SK-N-SH (cell line): ENCODE measurements at regions of chr2 and their contacts with region 1.

Region 1: GRCh38 chr2:47002480-47003381 is 87.1 kb upstream of the MCFD2 start:
- DNase-seq: peak; percentile 90
- H3K4me3 ChIP-seq: no peak overlapping the region
- H3K27ac ChIP-seq: peak overlapping the region; percentile 37 to 99; a peak in 3 of 4 replicates
- H3K4me1 ChIP-seq: peaks cover 9 to 87% of the 10 kb centered on the region in 2 experiments
- H3K27me3 ChIP-seq: no peaks in the 10 kb centered on the region
- CTCF ChIP-seq: no peak
- EP300 ChIP-seq: peak in 1 of 2 experiments; percentile 27; a peak in 1 of 4 replicates
- RAD21 ChIP-seq: no peak

Region 2: GRCh38 chr2:46806526-46806925 is 196.2 kb before region 1 on chr2:
- CTCF ChIA-PET with region 1: no interaction called
- POLR2A ChIA-PET with region 1: no interaction called
- DNase-seq: peak; percentile 3
- H3K4me3 ChIP-seq: no peak overlapping the region
- H3K27ac ChIP-seq: peak overlapping the region in 1 of 2 experiments; percentile 100; a peak in 2 of 4 replicates
- H3K4me1 ChIP-seq: peaks cover 24 to 58% of the 10 kb centered on the region in 2 experiments; a peak in 3 of 4 replicates
- H3K27me3 ChIP-seq: no peaks in the 10 kb centered on the region
- CTCF ChIP-seq: no peak
- EP300 ChIP-seq: peak in 1 of 2 experiments; percentile 93; a peak in 2 of 4 replicates
- RAD21 ChIP-seq: no peak

Region 3: DNA sequence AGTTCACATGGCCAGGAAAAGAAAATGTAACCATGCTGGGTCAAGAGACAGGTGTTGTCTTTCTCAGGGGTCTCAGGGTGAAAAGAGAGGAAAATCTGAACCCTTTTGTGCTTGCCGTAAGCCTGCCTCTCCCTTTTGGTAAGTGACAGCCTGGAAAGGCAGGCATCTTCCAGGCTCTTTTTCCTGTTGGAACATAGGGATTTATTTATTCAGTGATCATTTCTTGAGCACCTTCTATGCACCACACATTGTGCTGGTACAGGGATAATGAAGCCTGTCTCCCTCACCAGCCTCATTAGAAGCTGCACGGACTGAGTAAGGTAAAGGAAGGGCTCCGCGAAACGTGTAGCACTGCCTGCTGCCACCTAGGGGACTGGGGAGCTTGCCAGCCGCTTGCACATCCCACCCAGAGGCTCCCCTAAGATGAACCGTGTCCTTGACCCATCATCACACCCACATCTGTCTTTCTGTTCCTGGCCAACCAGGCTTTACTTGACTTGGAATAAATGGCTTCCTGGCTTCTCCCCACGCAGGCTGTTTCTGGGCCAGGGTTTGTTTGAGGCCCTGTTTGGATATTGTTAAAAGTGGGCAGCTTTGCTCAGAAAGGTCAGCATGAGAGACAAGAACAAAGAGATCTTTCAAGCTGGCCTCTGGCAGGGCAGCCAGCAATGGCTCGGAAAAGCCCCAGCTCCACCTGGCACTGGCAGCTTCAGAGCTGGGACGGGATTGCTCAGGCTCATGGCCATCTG is 13.8 kb before region 1 on chr2:
- CTCF ChIA-PET with region 1: interaction called, 3 read pairs
- POLR2A ChIA-PET with region 1: interaction called, 12 read pairs
- DNase-seq: peak; percentile 74
- H3K4me3 ChIP-seq: no peak overlapping the region
- H3K27ac ChIP-seq: peak overlapping the region in 1 of 2 experiments; percentile 93; a peak in 2 of 4 replicates
- H3K4me1 ChIP-seq: peaks cover 34 to 71% of the 10 kb centered on the region in 2 experiments
- H3K27me3 ChIP-seq: no peaks in the 10 kb centered on the region
- CTCF ChIP-seq: peak; percentile 26
- EP300 ChIP-seq: no peak
- RAD21 ChIP-seq: peak; percentile 39

Region 4: GRCh38 chr2:47016172-47016913 is 13.6 kb after region 1 on chr2:
- CTCF ChIA-PET with region 1: interaction called, 23 read pairs
- POLR2A ChIA-PET with region 1: interaction called, 3 read pairs
- DNase-seq: no peak
- H3K4me3 ChIP-seq: no peak overlapping the region
- H3K27ac ChIP-seq: peak overlapping the region; percentile 84 to 86
- H3K4me1 ChIP-seq: peaks cover 21 to 56% of the 10 kb centered on the region in 2 experiments
- H3K27me3 ChIP-seq: no peaks in the 10 kb centered on the region
- CTCF ChIP-seq: peak; percentile 50
- EP300 ChIP-seq: peak in 1 of 2 experiments; percentile 85; a peak in 2 of 4 replicates
- RAD21 ChIP-seq: peak; percentile 27

Region 5: GRCh38 chr2:47065771-47066380 is 63.1 kb after region 1 on chr2:
- CTCF ChIA-PET with region 1: interaction called, 3 read pairs
- POLR2A ChIA-PET with region 1: interaction called, 14 read pairs
- DNase-seq: peak; percentile 49
- H3K4me3 ChIP-seq: no peak overlapping the region
- H3K27ac ChIP-seq: peak overlapping the region; percentile 96 to 97
- H3K4me1 ChIP-seq: peaks cover 69 to 95% of the 10 kb centered on the region in 2 experiments
- H3K27me3 ChIP-seq: no peaks in the 10 kb centered on the region
- CTCF ChIP-seq: peak; percentile 33; the same call in 1 of the 2 replicates
- EP300 ChIP-seq: peak; percentile 38 to 98; a peak in 3 of 4 replicates
- RAD21 ChIP-seq: no peak; the same call in 1 of the 2 replicates

Region 6: DNA sequence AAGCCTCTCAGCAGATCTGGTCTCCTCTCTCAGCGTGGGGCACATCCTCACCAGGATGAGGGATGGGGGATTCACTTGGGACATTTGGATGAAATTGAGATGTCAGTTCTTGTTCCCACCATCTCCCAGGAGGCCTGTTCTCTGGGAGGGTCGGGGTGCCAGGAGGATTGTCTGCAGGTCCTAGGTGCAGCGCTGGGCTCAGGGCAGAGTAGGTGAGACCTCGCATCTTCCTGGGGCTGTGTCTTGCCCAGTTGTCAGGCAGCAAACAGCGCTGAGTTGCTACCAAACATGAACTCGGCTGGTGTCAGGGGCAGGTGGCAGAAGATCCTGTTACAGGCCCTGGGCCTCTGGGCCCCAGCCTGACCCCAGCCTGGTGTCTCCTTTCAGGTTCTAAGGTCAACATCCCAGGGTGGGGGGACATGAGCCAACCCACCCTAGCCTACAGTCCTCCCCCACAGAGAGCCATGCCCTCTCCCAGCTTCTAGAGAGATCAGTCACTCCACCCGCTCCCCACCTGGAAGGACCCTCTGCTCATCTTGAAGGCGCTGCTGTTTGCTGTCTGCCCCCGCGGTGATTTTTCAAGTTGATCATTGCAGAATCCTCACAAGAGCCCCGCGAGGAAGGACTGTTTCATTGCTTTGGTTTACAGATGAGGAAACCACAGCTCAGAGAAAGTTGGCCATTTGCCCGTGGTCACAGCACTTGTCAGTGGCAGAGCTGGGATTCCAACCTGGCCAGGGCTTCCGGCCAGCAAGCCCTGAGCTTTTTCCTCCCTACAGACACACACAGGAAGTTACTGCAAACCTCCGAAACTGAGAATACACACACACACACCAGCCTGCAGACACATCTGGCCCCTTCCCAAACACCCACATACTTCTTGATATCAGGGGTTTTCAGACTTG is 68.4 kb after region 1 on chr2:
- CTCF ChIA-PET with region 1: interaction called, 6 read pairs
- POLR2A ChIA-PET with region 1: interaction called, 13 read pairs
- DNase-seq: no peak
- H3K4me3 ChIP-seq: no peak overlapping the region
- H3K27ac ChIP-seq: peak overlapping the region; percentile 97 to 98
- H3K4me1 ChIP-seq: peaks cover 67 to 93% of the 10 kb centered on the region in 2 experiments
- H3K27me3 ChIP-seq: no peaks in the 10 kb centered on the region
- CTCF ChIP-seq: no peak
- EP300 ChIP-seq: peak in 1 of 2 experiments; percentile 37; a peak in 1 of 4 replicates
- RAD21 ChIP-seq: no peak